GM12878 (cell line): ENCODE measurements at regions of chr13 and their contacts with region 1.

Region 1: DNA sequence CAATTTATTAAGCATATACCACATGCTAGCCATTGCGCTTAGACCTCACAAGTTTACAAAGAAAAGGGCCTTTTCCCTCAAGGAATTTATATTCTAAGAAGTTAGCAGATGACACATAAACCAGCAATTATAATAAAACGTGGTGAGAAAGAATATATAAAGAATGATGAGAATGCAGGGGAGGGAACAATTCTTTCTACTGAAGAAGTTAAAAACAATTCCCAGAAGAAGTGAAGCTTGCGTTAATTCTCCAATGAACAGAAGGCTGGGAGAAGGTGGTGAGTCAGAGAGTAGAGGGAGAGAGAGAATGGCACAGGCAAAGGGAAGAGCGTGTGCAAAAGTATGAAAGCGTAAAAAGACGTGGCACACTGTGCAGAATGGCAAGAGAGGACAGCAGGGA is 69.5 kb upstream of the ZDHHC20 start:
- DNase-seq: no peak
- ATAC-seq: no peak
- H3K4me3 ChIP-seq: no peak overlapping the region
- H3K27ac ChIP-seq: no peak overlapping the region
- H3K4me1 ChIP-seq: no peaks in the 10 kb centered on the region
- H3K27me3 ChIP-seq: no peaks in the 10 kb centered on the region
- CTCF ChIP-seq: no peak
- EP300 ChIP-seq: no peak
- POLR2A ChIP-seq: no peak
- RAD21 ChIP-seq: no peak

Region 2: DNA sequence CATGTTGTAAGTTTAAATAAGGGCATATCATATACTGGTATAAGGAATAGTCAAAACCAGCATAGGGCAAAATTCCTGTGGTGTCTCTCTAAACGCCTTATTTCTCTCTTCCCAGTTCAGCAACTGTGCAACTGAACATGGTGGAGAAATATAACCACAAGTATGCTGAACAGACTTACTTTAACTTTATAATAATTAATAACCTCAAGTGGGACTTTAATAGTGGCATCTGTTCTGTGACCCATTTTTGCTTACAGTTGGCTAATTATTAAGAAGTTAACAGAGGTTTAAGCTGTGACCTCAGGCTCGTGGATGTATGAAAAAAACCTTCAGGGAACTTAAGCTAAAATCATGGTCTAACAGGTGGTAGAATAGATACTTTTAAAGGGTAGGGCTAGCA is 21.0 kb after region 1 on chr13:
- CTCF ChIA-PET with region 1: no interaction called
- POLR2A ChIA-PET with region 1: no interaction called
- RAD21 ChIA-PET with region 1: no interaction called
- SMC1A ChIA-PET with region 1: no interaction called
- in situ Hi-C with region 1: no loop called
- intact Hi-C with region 1: no loop called
- DNase-seq: no peak
- ATAC-seq: no peak
- H3K4me3 ChIP-seq: no peak overlapping the region
- H3K27ac ChIP-seq: no peak overlapping the region
- H3K4me1 ChIP-seq: no peaks in the 10 kb centered on the region
- H3K27me3 ChIP-seq: no peaks in the 10 kb centered on the region
- CTCF ChIP-seq: no peak
- EP300 ChIP-seq: no peak
- POLR2A ChIP-seq: no peak
- RAD21 ChIP-seq: no peak

Region 3: GRCh38 chr13:21579754-21580316 is 51.2 kb after region 1 on chr13:
- CTCF ChIA-PET with region 1: no interaction called
- POLR2A ChIA-PET with region 1: no interaction called
- RAD21 ChIA-PET with region 1: no interaction called
- SMC1A ChIA-PET with region 1: no interaction called
- in situ Hi-C with region 1: loop called (anchors 5 kb)
- intact Hi-C with region 1: no loop called
- DNase-seq: peak; percentile 19
- ATAC-seq: peak; percentile 83
- H3K4me3 ChIP-seq: no peak overlapping the region
- H3K27ac ChIP-seq: no peak overlapping the region
- H3K4me1 ChIP-seq: peaks cover 4% of the 10 kb centered on the region
- H3K27me3 ChIP-seq: no peaks in the 10 kb centered on the region
- CTCF ChIP-seq: no peak
- EP300 ChIP-seq: no peak
- POLR2A ChIP-seq: no peak
- RAD21 ChIP-seq: no peak